ENCODE measurements at regions of chrX and their contacts with region 1.

Region 1: DNA sequence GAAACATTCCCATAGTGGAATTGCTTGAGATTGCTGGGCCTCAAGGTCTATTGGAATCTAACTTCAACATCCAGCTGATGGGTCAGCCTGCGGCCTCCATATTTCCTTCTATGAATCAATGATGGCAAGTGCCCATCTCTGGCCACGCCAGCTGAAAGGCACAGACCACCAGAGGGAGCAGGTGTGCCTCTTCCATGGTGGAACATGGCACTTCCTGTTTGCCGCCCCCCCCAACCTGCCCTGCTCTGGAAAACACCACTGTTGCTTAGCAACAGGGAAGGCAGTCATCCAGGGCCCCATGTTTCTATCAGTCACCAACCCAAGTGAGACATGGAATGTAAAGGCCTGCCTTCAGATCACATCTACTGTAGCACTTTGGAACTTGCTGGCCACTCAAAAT is 11.6 kb downstream of the PAGE4 start:
- DNase-seq: peak; percentile 83
- ATAC-seq: peak; percentile 82
- H3K4me3 ChIP-seq: no peak overlapping the region
- H3K27ac ChIP-seq: peak overlapping the region; percentile 93
- H3K4me1 ChIP-seq: peaks cover 54% of the 10 kb centered on the region
- H3K27me3 ChIP-seq: no peaks in the 10 kb centered on the region
- CTCF ChIP-seq: peak; percentile 92
- EP300 ChIP-seq: peak in 1 of 2 experiments; percentile 14; a peak in 1 of 4 replicates
- POLR2A ChIP-seq: no peak
- RAD21 ChIP-seq: peak; percentile 77

Region 2: DNA sequence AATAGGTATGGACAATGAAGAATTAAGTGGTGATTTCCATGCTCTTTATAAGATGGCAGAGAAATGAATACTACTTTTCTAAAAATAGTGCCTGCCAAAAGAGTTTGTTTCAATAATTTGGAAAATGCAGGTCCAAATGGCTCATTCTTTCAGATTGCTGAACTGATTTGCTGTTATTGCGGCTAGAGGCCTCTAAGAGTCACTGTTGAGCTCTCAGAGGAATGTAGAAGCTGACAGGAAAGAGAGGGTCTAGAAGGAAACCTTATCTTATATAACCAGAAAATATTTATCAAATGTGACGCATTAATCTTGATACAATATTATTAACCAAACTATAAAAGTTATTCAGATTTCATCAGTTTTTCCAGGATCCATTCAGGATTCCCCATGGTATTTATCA is 79.2 kb before region 1 on chrX:
- CTCF ChIA-PET with region 1: interaction called, 40 read pairs
- POLR2A ChIA-PET with region 1: no interaction called
- in situ Hi-C with region 1: loop called (anchors 5 kb)
- intact Hi-C with region 1: loop called (anchors 1 kb)
- DNase-seq: peak; percentile 23
- ATAC-seq: no peak
- H3K4me3 ChIP-seq: no peak overlapping the region
- H3K27ac ChIP-seq: no peak overlapping the region
- H3K4me1 ChIP-seq: peaks cover 21% of the 10 kb centered on the region
- H3K27me3 ChIP-seq: no peaks in the 10 kb centered on the region
- CTCF ChIP-seq: peak; percentile 65
- EP300 ChIP-seq: no peak
- POLR2A ChIP-seq: no peak
- RAD21 ChIP-seq: no peak

Region 3: GRCh38 chrX:49878834-49879659 is 38.4 kb after region 1 on chrX and contains the start of gene USP27X:
- CTCF ChIA-PET with region 1: interaction called, 13 read pairs
- POLR2A ChIA-PET with region 1: interaction called, 91 read pairs
- in situ Hi-C with region 1: loop called (anchors 5 kb)
- intact Hi-C with region 1: loop called (anchors 1 kb)
- DNase-seq: peak; percentile 86
- ATAC-seq: peak; percentile 72
- H3K4me3 ChIP-seq: peak within 1 kb of the TSS; percentile 52 to 76 (median 71)
- H3K27ac ChIP-seq: peak within 1 kb of the TSS; percentile 97
- H3K4me1 ChIP-seq: peaks cover 64% of the 10 kb centered on the region
- H3K27me3 ChIP-seq: no peaks in the 10 kb centered on the region; a peak in 1 of 5 replicates
- CTCF ChIP-seq: peak; percentile 60
- EP300 ChIP-seq: no peak
- POLR2A ChIP-seq: peak in 1 of 2 experiments; percentile 60; a peak in 1 of 4 replicates
- RAD21 ChIP-seq: peak; percentile 18; the same call in 1 of the 2 replicates
- total RNA-seq, gene USP27X: 7.2 and 7.5 TPM in 2 replicates

Region 4: GRCh38 chrX:49910344-49910743 is 69.7 kb after region 1 on chrX:
- CTCF ChIA-PET with region 1: interaction called, 3 read pairs
- POLR2A ChIA-PET with region 1: interaction called, 4 read pairs
- in situ Hi-C with region 1: loop called (anchors 5 kb)
- intact Hi-C with region 1: loop called (anchors 1 kb)
- DNase-seq: no peak
- ATAC-seq: no peak
- H3K4me3 ChIP-seq: no peak overlapping the region
- H3K27ac ChIP-seq: no peak overlapping the region
- H3K4me1 ChIP-seq: peaks cover 19% of the 10 kb centered on the region
- H3K27me3 ChIP-seq: no peaks in the 10 kb centered on the region
- CTCF ChIP-seq: no peak
- EP300 ChIP-seq: no peak
- POLR2A ChIP-seq: no peak
- RAD21 ChIP-seq: no peak

Measured in HepG2 (cell line).